ENCODE measurements at regions of chr22 and their contacts with region 1.

Region 1: DNA sequence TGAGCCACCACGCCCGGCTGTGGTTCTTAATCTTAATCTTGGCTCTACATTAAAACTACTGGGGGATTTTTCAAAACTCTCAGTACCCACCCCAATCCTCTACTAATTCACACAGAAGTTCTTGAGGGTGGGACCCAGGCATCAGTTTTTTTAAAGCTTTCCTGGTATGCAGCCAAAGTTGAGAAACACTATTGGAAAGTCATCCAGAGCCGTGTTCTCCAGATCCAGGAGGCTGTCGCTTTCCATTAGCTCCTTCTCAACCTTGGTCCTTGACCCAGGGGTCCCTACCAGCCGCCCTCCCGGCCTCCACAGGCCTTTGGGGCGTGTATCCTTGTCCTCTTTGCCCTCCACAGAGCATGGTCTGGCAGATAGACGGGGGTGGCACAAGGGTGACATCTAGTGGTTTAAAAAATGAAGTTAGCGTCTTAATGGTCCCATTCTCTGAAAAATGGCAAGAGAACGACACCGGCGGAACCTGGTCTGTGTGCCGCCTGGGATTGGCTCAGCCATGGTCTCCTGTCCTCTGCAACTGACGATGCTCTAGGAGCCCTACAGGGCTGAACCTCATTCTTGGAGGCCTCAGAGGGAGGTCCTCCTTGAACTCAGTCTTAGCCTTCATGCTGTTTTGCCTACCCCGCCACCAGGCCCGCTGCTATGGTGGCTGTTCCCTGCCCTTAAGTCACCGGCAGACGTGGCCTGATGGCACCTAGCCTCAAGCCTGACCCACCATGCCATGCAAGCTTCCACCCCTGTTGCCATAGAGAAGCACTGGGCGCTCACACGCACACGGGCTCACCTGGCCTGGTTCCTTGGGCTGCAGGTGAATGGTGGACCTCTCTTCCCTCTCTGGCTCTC is 152.0 kb upstream of the SYN3 start:
- DNase-seq: peak; percentile 14 to 22 (median 18)
- ATAC-seq: no peak
- H3K4me3 ChIP-seq: no peak overlapping the region
- H3K27ac ChIP-seq: no peak overlapping the region
- H3K4me1 ChIP-seq: peaks cover 5% of the 10 kb centered on the region
- H3K27me3 ChIP-seq: no peaks in the 10 kb centered on the region
- CTCF ChIP-seq: peak; percentile 44 to 67 (median 52)
- POLR2A ChIP-seq: no peak

Region 2: GRCh38 chr22:33028234-33028633 is 181.9 kb before region 1 on chr22:
- intact Hi-C with region 1: loop called (anchors 10 kb)
- DNase-seq: no peak
- ATAC-seq: no peak
- H3K4me3 ChIP-seq: no peak overlapping the region
- H3K27ac ChIP-seq: no peak overlapping the region
- H3K4me1 ChIP-seq: no peaks in the 10 kb centered on the region
- H3K27me3 ChIP-seq: no peaks in the 10 kb centered on the region
- CTCF ChIP-seq: no peak
- POLR2A ChIP-seq: no peak

Measured in body of pancreas (tissue), 4 donors.